ENCODE measurements at regions of chr3 and their contacts with region 1.

Region 1: DNA sequence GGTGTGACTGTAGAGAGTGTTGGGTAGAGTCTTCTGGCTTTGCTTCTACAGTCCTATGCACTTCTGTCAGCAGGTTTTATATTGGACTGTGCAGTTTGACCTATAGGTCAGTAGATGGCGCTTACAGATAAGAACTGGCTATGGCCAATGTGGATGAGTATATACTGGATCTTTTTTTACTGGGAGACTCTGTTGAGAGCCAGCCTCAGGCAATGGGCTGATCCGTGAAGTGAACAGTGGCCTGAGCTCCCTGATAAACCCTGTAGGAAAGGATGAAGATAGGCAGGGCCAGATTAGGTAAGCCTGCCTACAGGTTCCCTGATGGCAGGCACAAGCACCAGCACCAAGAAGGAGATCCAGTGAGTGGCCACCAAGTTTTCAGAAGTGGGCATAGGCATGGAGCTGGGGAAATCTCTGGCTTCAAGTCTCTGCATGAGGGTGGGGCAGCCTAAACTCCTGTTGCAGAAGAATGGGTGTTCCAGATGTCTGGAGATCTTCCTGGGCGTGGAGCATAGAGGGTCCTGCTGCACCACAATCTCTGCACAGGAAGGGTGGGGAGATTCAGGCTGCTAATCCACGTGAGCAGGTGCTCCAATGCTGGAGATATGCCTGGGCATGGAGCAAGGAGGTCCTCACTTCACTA is 326.0 kb upstream of the SGO1 start:
- DNase-seq: no peak
- ATAC-seq: peak; percentile 86

Region 2: GRCh38 chr3:20739814-20740213 is 227.8 kb after region 1 on chr3:
- intact Hi-C with region 1: loop called (anchors 2 kb)
- DNase-seq: no peak
- ATAC-seq: peak; percentile 61

Region 3: GRCh38 chr3:20930034-20930433 is 418.1 kb after region 1 on chr3:
- intact Hi-C with region 1: loop called (anchors 5 kb)
- DNase-seq: no peak
- ATAC-seq: no peak

Region 4: GRCh38 chr3:21894459-21895340 is 1382.7 kb after region 1 on chr3:
- intact Hi-C with region 1: loop called (anchors 10 kb)
- DNase-seq: no peak
- ATAC-seq: peak; percentile 68